ENCODE measurements at regions of chr14 and their contacts with region 1.

Region 1: DNA sequence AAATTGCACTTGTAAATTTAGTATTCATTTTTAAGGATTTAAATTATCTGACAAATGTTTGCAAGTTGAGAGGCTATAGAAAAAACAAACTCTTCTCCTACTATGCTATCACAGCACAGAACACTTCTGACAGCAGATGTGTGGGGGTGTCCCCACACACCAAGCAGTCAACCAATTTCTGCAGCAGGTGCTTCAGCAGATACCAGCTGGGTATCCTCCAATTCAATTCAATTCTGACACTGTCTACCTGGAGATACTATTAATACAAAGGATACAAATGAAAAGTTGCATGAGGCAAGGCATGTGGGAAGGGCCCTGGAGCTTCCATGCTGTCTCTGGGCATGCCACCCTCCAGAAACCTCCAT is 35.1 kb downstream of the PCNX1 start:
- DNase-seq: no peak
- ATAC-seq: peak in 1 of 2 donors; percentile 17
- H3K4me3 Mint-ChIP-seq: peak overlapping the region in 8 of 10 donors; percentile 22 to 75 (median 62)
- H3K27ac Mint-ChIP-seq: peak overlapping the region; percentile 36 to 98 (median 88)
- H3K4me1 Mint-ChIP-seq: peaks cover 41 to 73% (median 67%) of the 10 kb centered on the region in 4 donors
- H3K27me3 Mint-ChIP-seq: no peaks in the 10 kb centered on the region

Region 2: GRCh38 chr14:70955543-70956480 is 13.5 kb after region 1 on chr14:
- POLR2A ChIA-PET with region 1: interaction called, 24 read pairs
- DNase-seq: peak in 9 of 10 donors; percentile 20 to 73 (median 53)
- ATAC-seq: peak; percentile 85 to 91
- H3K4me3 Mint-ChIP-seq: peak overlapping the region in 2 of 10 donors; percentile 7 to 36
- H3K27ac Mint-ChIP-seq: peak overlapping the region in 7 of 10 donors; percentile 9 to 86 (median 64)
- H3K4me1 Mint-ChIP-seq: peaks cover 14 to 43% (median 37%) of the 10 kb centered on the region in 4 donors
- H3K27me3 Mint-ChIP-seq: no peaks in the 10 kb centered on the region

Region 3: DNA sequence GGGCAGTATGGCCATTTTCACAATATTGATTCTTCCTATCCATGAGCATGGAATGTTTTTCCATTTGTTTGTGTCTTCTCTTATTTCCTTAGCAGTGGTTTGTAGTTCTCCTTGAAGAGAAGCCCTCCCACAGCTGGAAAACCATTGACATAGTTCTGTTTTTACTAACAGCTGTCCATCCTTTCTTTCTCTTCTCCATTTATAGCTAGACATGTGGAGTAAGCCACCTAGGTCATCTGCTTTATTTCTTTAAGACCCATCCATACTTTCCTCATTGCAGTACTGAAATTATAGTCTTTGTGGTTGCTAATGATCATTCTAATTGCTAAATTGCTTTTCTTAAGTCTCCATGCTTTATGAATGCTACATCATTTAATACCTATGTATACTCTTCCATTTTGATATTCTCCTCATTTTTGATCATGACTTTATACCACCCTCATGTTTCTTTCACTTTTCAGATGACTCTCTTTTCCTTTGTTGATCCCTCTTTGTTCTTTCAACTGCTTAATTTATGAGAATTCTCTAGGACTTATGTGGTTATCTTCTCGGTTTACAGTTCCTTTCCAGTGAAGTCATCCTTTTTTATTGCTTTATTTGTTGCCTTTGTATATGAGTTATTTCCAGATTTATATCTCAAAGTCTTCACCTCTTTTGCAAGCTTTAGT is 79.2 kb after region 1 on chr14:
- POLR2A ChIA-PET with region 1: no interaction called
- DNase-seq: no peak
- ATAC-seq: no peak
- H3K4me3 Mint-ChIP-seq: peak overlapping the region in 1 of 10 donors; percentile 7
- H3K27ac Mint-ChIP-seq: peak overlapping the region in 7 of 10 donors; percentile 2 to 68 (median 8)
- H3K4me1 Mint-ChIP-seq: peaks cover 13 to 23% (median 22%) of the 10 kb centered on the region in 4 donors
- H3K27me3 Mint-ChIP-seq: no peaks in the 10 kb centered on the region

Measured in naive thymus-derived CD8-positive, alpha-beta T cell (primary cell).